Right ventricle myocardium superior (tissue), 1 donor: ENCODE measurements at regions of chr4 and their contacts with region 1.

Region 1: DNA sequence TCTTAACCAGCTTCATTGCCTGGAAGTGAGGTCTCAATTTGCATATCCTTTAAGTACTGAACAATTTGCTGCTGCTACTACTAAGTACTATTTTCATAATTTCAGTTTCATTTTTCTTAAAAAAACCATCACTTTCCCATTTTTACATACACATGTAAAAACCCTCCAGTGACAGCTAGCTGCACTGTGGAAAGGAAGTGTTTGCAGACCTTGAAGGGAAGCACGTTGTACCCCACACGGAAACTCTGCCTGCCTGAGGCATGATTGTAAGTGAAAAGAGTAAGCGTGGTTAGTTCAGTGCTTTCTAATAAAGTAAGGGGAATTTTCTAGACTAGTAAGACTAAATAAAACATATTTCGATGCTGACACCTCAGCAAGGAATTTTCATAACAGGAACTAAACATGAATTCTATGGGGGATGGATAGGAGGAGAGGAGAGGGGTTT is 103.6 kb downstream of the RAPGEF2 start:
- DNase-seq: no peak
- ATAC-seq: no peak

Region 2: DNA sequence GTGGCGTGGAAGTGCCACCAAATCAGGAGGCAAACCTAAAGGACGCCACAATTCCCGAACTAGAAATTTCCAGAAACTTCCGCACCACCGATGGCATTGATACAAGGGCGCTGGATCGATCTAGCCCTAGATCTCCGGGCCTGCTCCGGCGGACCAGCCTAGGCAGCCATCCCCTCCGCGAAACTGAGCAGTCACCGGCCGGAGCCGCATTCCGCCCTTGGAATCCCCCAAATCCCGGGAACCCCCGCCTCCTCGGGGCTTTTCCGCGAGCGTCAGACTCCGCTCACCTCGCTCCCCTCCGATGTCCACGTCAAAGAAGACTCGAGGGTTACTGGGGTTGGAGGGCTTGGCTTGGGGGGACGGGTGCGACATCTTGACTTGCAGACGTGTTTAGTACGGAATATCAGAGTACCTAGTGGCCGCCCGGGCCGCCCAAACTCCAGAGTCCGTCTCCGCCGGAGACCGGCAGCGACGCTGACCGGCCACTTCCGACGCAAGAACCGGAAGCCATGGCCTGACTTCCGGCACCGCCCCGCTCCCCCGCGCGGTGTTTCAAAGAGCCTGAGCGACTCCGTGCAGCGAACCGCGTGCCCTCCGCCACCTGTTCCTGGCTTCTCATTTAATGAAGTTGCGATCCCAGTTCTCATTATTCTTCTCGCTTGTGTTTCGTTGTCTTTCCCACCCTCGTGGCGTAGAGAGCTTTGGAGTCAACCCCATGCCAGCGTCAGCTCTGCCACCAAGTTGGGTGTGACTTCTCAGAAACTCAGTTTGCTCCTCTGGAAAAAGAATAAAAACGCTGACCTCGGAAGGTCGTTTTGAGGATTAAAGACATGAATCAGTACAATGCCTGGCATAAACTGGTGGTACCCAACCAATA is 483.3 kb before region 1 on chr4 and contains the start of gene PPID:
- intact Hi-C with region 1: loop called (anchors 10 kb)
- DNase-seq: peak; percentile 91
- ATAC-seq: peak; percentile 99
- total RNA-seq, gene PPID: 36.3 TPM

Region 3: DNA sequence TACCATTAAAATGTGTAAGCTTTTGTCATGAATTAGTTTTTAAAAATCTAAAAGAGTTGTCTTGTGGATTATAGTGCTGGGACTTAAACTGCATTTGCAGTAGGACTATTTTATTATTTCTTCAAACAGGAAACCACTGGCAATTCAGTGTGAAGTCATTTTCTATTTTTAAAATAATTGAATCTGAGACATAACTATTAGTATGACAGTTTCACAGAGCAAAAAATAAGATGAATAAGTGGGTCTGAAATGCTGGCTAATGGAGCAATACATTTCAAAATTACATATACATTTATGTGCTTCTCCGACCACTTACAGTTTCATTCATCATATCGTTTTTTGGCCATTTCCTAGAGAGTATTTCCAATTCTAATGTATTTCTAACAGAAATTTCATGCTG is 178.9 kb before region 1 on chr4:
- intact Hi-C with region 1: loop called (anchors 10 kb)
- DNase-seq: no peak
- ATAC-seq: no peak

Region 4: GRCh38 chr4:159266981-159267868 is 60.8 kb after region 1 on chr4:
- intact Hi-C with region 1: no loop called
- DNase-seq: no peak
- ATAC-seq: peak; percentile 69

Region 5: GRCh38 chr4:159446266-159446976 is 240.0 kb after region 1 on chr4:
- intact Hi-C with region 1: loop called (anchors 10 kb)
- DNase-seq: peak; percentile 42
- ATAC-seq: peak; percentile 98